IMR-90 (cell line): ENCODE measurements at regions of chr1 and their contacts with region 1.

Region 1: GRCh38 chr1:155135415-155136028 is at the start of gene SLC50A1:
- DNase-seq: peak; percentile 91
- ATAC-seq: peak; percentile 91
- H3K4me3 ChIP-seq: peak within 1 kb of the TSS; percentile 72
- H3K27ac ChIP-seq: peak within 1 kb of the TSS; percentile 97
- H3K4me1 ChIP-seq: peaks cover 8% of the 10 kb centered on the region; the same call in 1 of the 2 replicates
- H3K27me3 ChIP-seq: no peaks in the 10 kb centered on the region
- CTCF ChIP-seq: 0 out of 2 replicates have a peak, but pooled peaks have one; percentile 24
- POLR2A ChIP-seq: peak; percentile 90
- RAD21 ChIP-seq: no peak
- total RNA-seq, gene SLC50A1: 20.6 and 21.1 TPM in 2 replicates

Region 2: DNA sequence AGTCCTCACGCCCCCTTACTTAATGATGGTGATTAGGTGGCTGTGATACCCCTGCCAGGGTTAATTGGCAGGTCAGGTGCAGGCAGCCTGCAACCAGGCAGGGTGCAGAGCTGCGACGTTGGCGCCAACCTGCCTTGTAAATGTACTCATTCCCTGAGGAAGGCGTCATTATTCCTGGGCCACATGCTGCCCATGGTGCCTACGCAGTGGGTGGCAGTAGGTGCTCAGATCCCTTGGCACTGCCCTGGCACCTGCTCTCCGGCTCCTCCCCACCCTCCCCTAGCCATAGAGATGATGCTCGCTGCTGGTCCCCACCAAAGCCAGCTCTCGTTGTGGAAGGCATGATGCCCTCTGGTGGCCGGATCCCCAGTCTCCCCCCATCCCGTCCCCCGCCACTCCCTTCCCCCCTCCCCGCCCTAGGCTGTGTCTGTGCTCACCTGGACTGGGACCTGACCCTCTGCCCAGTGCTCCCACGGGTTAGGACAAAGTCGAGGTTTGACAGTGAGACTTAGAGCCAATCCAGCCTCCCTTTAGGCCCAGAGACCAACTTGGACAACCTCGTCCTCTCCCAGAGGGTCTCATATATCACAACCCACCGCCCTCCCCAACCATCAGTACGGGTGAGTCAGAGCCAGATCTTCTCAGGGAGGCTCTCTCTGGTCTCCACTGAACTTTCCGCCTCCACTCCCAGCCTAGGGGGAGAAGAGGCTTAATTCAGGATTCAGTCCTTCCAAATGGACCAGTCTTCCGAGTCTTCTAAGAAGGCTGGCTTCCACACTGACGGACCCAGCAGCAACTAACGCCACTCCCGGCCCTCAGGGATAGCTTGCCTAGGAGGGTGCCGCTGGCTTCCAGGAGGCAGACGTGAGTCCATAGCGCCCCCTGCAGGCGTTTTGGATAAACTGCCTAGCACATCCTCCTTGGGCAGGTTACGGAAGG is 31.9 kb after region 1 on chr1:
- CTCF ChIA-PET with region 1: no interaction called
- POLR2A ChIA-PET with region 1: no interaction called
- dilution Hi-C with region 1: no loop called
- in situ Hi-C with region 1: no loop called
- intact Hi-C with region 1: loop called (anchors 1 kb)
- DNase-seq: peak; percentile 72
- ATAC-seq: peak; percentile 81
- H3K4me3 ChIP-seq: no peak overlapping the region
- H3K27ac ChIP-seq: no peak overlapping the region
- H3K4me1 ChIP-seq: peaks cover 4% of the 10 kb centered on the region; the same call in 1 of the 2 replicates
- H3K27me3 ChIP-seq: peaks cover 6% of the 10 kb centered on the region; the same call in 1 of the 2 replicates
- CTCF ChIP-seq: peak; percentile 94
- POLR2A ChIP-seq: peak; percentile 39
- RAD21 ChIP-seq: peak; percentile 95

Region 3: DNA sequence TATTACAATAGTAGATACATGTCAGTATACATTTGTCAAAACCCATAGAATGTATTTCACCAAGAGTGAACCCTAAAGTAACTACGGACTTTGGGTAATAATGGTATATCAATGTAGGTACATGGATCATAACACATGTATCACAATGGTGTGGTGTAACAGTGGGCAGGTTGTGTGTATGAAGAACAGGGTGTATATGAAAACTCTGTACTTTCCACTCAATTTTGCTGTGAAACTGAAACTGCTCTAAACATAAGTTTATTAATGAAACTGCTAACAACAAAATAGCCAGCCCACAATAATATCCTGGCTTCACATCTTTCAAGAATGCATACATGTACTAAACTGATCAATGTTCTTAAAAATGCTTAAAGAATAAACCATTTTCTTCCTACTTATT is 275.4 kb after region 1 on chr1:
- CTCF ChIA-PET with region 1: no interaction called
- POLR2A ChIA-PET with region 1: no interaction called
- dilution Hi-C with region 1: no loop called
- in situ Hi-C with region 1: no loop called
- intact Hi-C with region 1: no loop called
- DNase-seq: no peak
- ATAC-seq: no peak
- H3K4me3 ChIP-seq: no peak overlapping the region
- H3K27ac ChIP-seq: no peak overlapping the region
- H3K4me1 ChIP-seq: no peaks in the 10 kb centered on the region
- H3K27me3 ChIP-seq: no peaks in the 10 kb centered on the region
- CTCF ChIP-seq: no peak
- POLR2A ChIP-seq: no peak
- RAD21 ChIP-seq: no peak